Activated CD4-positive, alpha-beta T cell treated with anti-CD3 and anti-CD28 coated beads for 36 hours (primary cell): ENCODE measurements at regions of chr20 and their contacts with region 1.

Region 1: DNA sequence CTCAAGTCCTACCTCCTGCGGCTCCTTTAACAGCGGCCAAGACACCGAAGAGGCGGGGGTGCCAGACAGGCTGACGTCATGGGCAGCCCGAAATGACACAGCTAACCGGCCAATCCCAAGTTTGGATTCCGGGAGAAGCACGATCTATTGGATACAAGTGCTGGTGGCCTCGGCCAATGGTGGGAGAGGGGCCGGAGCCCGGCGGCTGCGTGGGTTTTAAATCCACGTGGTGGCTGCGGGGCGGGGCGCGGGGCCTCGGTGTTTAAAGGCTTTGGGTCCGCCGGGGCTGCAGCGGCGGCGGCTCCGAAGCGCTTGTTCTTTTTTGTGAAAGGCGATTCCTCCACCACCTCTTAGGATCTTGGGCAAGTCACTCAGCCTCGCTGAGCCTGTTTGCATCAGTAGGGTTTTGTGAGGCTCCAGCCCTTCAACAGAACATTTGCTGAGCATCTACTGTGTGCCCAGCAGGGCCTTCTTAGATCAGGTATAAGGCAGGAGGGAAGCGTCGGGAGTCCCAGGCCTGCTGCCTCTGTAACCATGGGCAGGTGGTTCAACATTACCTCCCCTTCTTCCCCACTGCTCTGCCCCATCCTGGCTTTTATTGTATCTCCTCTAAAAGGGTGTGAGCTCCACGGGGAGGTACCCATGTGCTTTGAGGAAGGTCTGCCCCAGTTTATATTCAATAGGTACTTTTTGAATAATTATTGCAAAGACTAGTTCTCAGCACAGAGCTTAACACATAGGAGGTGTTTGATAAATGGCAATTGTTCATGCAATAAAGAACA is 8.9 kb upstream of the PMEPA1 start:
- DNase-seq: peak; percentile 95
- ATAC-seq: peak; percentile 100
- H3K4me3 Mint-ChIP-seq: peak overlapping the region; percentile 37
- H3K27ac Mint-ChIP-seq: no peak overlapping the region
- H3K4me1 Mint-ChIP-seq: peaks cover 5% of the 10 kb centered on the region
- H3K27me3 Mint-ChIP-seq: no peaks in the 10 kb centered on the region

Region 2: GRCh38 chr20:57748601-57749130 is 30.0 kb after region 1 on chr20:
- CTCF ChIA-PET with region 1: interaction called, 3 read pairs
- POLR2A ChIA-PET with region 1: no interaction called
- intact Hi-C with region 1: loop called in 1 of 2 experiments (anchors 2 kb)
- DNase-seq: peak; percentile 77
- ATAC-seq: peak; percentile 94
- H3K4me3 Mint-ChIP-seq: peak overlapping the region; percentile 48
- H3K27ac Mint-ChIP-seq: peak overlapping the region; percentile 31
- H3K4me1 Mint-ChIP-seq: peaks cover 15% of the 10 kb centered on the region
- H3K27me3 Mint-ChIP-seq: peaks cover 25% of the 10 kb centered on the region

Region 3: GRCh38 chr20:58017237-58017969 is 298.7 kb after region 1 on chr20:
- CTCF ChIA-PET with region 1: no interaction called
- POLR2A ChIA-PET with region 1: no interaction called
- intact Hi-C with region 1: loop called in 1 of 2 experiments (anchors 1 kb)
- DNase-seq: no peak
- ATAC-seq: no peak
- H3K4me3 Mint-ChIP-seq: no peak overlapping the region
- H3K27ac Mint-ChIP-seq: no peak overlapping the region
- H3K4me1 Mint-ChIP-seq: peaks cover 16% of the 10 kb centered on the region
- H3K27me3 Mint-ChIP-seq: peaks cover 16% of the 10 kb centered on the region